OCI-LY7 (cell line): ENCODE measurements at regions of chr2 and their contacts with region 1.

Region 1: GRCh38 chr2:171160119-171160955 is at the start of gene TLK1:
- DNase-seq: peak; percentile 90
- H3K4me3 ChIP-seq: peak within 1 kb of the TSS; percentile 94
- H3K27ac ChIP-seq: peak within 1 kb of the TSS; percentile 95
- H3K4me1 ChIP-seq: peaks cover 56% of the 10 kb centered on the region
- CTCF ChIP-seq: 0 out of 2 replicates have a peak, but pooled peaks have one; percentile 1
- total RNA-seq, gene TLK1: 27.2 and 29.7 TPM in 2 replicates

Region 2: GRCh38 chr2:170928824-170929685 is 231.3 kb before region 1 on chr2 and contains the start of gene GORASP2:
- CTCF ChIA-PET with region 1: no interaction called
- POLR2A ChIA-PET with region 1: no interaction called
- intact Hi-C with region 1: loop called (anchors 2 kb)
- DNase-seq: peak; percentile 100
- H3K4me3 ChIP-seq: peak within 1 kb of the TSS; percentile 75
- H3K27ac ChIP-seq: peak within 1 kb of the TSS; percentile 68
- H3K4me1 ChIP-seq: peaks cover 38% of the 10 kb centered on the region
- CTCF ChIP-seq: peak; percentile 86
- total RNA-seq, gene GORASP2: 30.7 and 44.2 TPM in 2 replicates

Region 3: DNA sequence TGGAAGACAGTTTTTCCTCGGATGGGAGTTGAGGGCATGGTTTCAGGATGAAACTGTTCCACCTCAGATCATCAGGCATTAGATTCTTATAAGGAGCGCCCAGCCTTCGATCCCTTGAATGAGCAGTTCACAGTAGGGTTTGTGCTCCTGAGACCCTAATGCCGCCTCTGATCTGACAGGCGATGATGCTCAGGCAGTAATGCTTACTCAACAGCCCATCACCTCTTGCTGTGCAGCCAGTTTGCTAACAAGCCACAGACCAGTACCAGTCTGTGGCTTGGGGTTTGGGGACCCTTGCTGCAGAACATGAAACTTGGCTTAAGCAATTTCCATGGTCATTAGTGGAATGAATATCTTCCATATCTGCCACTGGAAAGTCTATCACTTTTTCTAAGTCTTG is 174.9 kb before region 1 on chr2:
- CTCF ChIA-PET with region 1: no interaction called
- POLR2A ChIA-PET with region 1: interaction called, 5 read pairs
- intact Hi-C with region 1: loop called (anchors 5 kb)
- DNase-seq: no peak
- H3K4me3 ChIP-seq: no peak overlapping the region
- H3K27ac ChIP-seq: no peak overlapping the region
- H3K4me1 ChIP-seq: no peaks in the 10 kb centered on the region
- CTCF ChIP-seq: no peak

Region 4: GRCh38 chr2:171210864-171211431 is 50.6 kb after region 1 on chr2:
- CTCF ChIA-PET with region 1: no interaction called
- POLR2A ChIA-PET with region 1: no interaction called
- intact Hi-C with region 1: loop called (anchors 1 kb)
- DNase-seq: peak; percentile 80
- H3K4me3 ChIP-seq: peak overlapping the region; percentile 59
- H3K27ac ChIP-seq: peak overlapping the region; percentile 87
- H3K4me1 ChIP-seq: peaks cover 38% of the 10 kb centered on the region
- CTCF ChIP-seq: no peak

Region 5: DNA sequence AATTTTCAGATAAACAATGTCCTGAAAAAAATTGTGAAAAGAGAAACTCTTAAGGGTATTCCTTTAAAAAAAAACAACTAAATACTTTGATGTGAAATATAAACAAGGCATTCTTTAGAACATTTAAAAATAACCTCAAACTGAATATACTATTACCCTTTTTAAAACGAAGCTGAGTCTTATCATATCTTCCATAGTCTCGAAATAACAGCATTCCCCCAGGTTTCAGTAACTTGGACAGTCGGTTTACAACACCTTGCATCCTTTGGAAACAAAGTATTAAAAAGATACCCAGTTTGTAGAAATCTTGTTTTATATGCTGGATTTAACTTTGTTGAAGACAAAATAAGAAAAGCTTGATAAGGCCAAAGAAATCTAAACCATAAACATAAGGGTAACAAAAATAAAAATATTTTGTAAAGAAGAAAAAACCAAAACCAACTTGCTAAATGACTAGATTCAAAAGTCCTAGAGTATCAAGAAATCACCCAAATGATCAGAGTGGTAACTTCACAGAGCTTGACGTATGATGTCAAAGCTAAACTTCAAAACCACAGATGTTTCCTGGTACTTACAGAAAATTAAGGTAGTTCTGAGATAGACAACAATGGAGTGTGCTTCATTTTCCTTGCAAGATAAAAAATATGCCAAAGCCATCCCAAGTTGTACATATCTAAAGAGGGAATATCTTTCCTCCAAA is 165.7 kb after region 1 on chr2:
- CTCF ChIA-PET with region 1: no interaction called
- POLR2A ChIA-PET with region 1: interaction called, 8 read pairs
- intact Hi-C with region 1: loop called (anchors 1 kb)
- DNase-seq: no peak
- H3K4me3 ChIP-seq: no peak overlapping the region
- H3K27ac ChIP-seq: peak overlapping the region; percentile 100
- H3K4me1 ChIP-seq: peaks cover 93% of the 10 kb centered on the region
- CTCF ChIP-seq: no peak

Region 6: DNA sequence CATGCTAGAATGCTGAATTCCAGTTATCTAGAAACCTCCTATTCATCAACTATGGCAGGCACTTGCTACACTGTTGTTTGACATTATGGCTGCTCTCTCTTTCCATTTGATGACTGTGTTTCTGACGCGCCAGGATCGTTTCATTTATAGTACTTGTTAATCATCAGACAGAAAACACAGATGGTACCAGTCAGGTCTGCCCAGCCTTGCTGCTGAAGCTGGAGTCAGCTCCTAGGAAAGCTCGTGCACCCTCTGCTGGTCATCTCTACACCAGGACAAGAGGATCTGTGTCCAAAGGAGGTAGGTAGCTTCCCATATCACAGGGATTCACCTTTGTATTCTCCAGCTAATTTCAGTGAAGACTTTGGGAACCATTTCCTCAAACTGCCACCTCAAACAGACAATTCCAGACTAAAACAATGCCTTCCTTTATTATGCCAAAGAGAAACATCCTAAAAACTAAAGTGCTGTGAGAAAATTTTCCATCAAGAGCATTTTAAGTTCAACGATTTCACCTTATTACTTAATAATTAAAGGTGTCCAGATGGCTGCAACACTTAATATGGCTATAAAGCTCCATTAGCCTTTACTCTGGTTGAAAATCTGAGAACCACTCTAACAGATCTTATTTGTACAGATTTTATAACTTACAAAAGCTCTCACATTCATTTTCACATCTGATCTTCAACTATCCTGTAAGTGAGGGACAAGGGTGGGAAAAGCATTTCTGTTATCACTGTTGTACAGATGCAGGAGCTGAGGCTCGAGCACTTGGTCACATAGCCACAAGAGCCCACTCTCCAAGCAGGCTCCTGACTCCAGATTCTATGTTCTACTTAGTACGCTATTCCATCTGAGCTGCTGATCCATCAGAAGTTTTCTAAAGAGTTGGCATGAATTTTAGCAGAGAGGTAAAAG is 255.9 kb after region 1 on chr2:
- CTCF ChIA-PET with region 1: no interaction called
- POLR2A ChIA-PET with region 1: interaction called, 7 read pairs
- intact Hi-C with region 1: loop called (anchors 1 kb)
- DNase-seq: peak; percentile 96
- H3K4me3 ChIP-seq: peak overlapping the region; percentile 3
- H3K27ac ChIP-seq: peak overlapping the region; percentile 62
- H3K4me1 ChIP-seq: peaks cover 41% of the 10 kb centered on the region
- CTCF ChIP-seq: peak; percentile 98